Sciatic nerve (tissue), 2 donors: ENCODE measurements at regions of chr5 and their contacts with region 1.

Region 1: DNA sequence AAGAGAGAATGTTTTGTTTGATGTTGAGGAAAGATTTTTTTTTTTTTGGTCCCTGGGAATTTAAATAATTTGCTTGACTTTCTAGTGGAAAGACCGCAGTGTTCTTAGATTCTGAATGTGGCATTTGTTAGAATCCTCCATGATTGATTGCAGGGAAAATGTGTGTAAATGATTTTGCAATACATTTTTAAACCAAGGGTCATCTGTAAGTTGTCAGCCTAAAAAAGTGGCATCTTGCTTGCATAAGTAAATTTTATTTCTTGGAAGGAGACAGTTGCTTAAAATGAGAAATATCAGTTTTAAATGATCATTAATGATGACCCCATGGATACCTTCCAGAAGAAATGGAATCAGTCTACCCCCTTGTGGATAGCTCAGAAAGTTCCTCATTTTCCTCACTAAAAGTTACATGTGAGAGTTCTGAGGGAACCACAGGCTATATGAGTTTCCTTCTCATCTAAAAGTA is 105.1 kb upstream of the SLC25A48 start:
- DNase-seq: no peak
- ATAC-seq: peak; percentile 76

Region 2: DNA sequence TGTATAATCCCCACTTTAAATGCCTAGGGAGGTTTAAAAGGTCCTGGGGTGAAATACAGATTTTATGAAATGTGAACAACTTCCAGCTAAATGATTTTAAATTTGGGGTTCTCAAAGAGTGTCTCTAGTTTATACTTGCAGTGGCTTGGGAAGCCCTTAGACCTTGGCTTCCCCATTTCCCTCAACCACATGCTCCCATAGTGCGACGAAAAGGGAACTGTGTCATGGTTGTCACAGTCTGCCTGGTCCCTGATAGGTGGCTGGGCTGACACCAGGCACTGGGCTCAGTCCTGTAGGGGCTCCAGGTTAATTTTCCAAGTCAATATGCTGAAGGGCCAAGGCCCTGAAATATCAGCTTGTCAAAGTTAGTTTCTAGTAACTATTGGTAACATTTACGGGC is 140.2 kb before region 1 on chr5:
- intact Hi-C with region 1: loop called (anchors 10 kb)
- DNase-seq: no peak
- ATAC-seq: no peak